Ovary (tissue), 10 donors: ENCODE measurements at regions of chr22 and their contacts with region 1.

Region 1: GRCh38 chr22:19195796-19196731 is 17.5 kb upstream of the SLC25A1 start:
- DNase-seq: no peak
- H3K4me3 ChIP-seq: no peak overlapping the region
- H3K27ac ChIP-seq: no peak overlapping the region
- H3K4me1 ChIP-seq: no peaks in the 10 kb centered on the region
- H3K27me3 ChIP-seq: no peaks in the 10 kb centered on the region
- CTCF ChIP-seq: no peak
- EP300 ChIP-seq: no peak
- POLR2A ChIP-seq: no peak

Region 2: GRCh38 chr22:18998998-18999397 is 197.1 kb before region 1 on chr22:
- intact Hi-C with region 1: no loop called
- DNase-seq: no peak
- H3K4me3 ChIP-seq: no peak overlapping the region
- H3K27ac ChIP-seq: no peak overlapping the region
- H3K4me1 ChIP-seq: no peaks in the 10 kb centered on the region
- H3K27me3 ChIP-seq: no peaks in the 10 kb centered on the region
- CTCF ChIP-seq: no peak
- EP300 ChIP-seq: no peak
- POLR2A ChIP-seq: no peak

Region 3: DNA sequence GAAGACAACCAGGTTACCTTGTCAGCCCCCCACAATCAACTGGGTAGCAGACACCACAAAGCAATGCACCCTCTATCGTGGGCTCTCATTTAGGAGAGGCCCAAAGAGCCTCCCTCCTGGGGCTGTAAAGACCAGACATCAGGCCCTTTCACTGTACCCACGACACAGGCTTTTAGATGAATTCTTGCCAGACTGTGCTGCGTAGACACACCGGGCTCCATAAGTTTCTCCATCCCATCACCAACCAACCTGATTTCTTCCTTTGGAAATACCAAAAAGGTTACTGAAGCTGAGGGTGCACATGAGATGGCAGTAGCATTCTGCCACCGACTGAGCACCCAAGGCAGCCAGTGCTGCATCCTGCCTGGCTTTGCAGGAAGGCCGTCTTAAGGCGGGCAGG is 28.9 kb after region 1 on chr22:
- intact Hi-C with region 1: loop called in 1 of 4 experiments (anchors 1 kb)
- DNase-seq: no peak
- H3K4me3 ChIP-seq: no peak overlapping the region
- H3K27ac ChIP-seq: no peak overlapping the region
- H3K4me1 ChIP-seq: no peaks in the 10 kb centered on the region
- H3K27me3 ChIP-seq: no peaks in the 10 kb centered on the region
- CTCF ChIP-seq: no peak
- EP300 ChIP-seq: no peak
- POLR2A ChIP-seq: no peak

Region 4: GRCh38 chr22:19260804-19261203 is 64.7 kb after region 1 on chr22:
- intact Hi-C with region 1: no loop called
- DNase-seq: no peak
- H3K4me3 ChIP-seq: no peak overlapping the region
- H3K27ac ChIP-seq: no peak overlapping the region
- H3K4me1 ChIP-seq: peaks cover 1% of the 10 kb centered on the region
- H3K27me3 ChIP-seq: no peaks in the 10 kb centered on the region
- CTCF ChIP-seq: no peak
- EP300 ChIP-seq: no peak
- POLR2A ChIP-seq: no peak